Activated B cell treated with CpG ODN at 0.5 μM for 24 hours (primary cell): ENCODE measurements at regions of chr10 and their contacts with region 1.

Region 1: DNA sequence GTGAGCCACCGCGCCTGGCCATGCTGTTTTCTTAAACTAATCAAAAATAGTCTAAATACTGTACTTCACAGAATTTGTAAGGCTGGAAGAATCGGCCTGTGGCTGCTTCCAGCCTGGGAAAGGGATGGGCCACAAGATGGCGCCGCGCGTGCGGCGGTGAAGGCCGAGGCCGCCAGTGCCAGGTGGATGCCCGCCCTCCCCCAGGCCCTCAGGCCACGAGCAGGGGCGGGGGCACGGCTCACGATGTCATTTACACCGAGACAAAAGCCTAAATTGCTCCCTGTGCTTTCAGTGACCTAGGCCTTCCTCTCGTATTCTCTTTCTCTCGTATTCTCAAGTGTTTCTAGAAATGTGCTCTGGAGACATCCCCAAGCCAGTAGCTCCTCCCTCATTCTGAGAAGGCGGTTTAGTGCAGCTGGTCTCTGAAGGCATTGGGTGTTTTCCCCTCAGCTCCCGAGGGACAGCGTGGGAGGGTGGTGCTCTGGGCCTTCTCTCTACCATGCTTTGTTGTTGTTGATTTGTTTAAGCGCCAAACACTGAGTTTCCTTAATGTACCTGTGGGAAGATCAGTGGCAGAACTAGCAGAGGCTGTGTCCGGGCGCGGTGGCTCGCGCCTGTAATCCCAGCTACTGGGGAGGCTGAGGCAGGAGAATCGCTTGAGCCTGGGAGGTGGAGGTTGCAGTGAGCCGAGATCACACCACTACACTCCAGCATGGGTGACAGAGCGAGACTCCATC is 68.4 kb downstream of the CDC123 start:
- DNase-seq: peak; percentile 86
- ATAC-seq: peak; percentile 87
- H3K4me3 Mint-ChIP-seq: peak overlapping the region; percentile 83
- H3K27ac Mint-ChIP-seq: peak overlapping the region; percentile 100
- H3K4me1 Mint-ChIP-seq: peaks cover 58% of the 10 kb centered on the region
- H3K27me3 Mint-ChIP-seq: no peaks in the 10 kb centered on the region
- CTCF ChIP-seq: no peak

Region 2: DNA sequence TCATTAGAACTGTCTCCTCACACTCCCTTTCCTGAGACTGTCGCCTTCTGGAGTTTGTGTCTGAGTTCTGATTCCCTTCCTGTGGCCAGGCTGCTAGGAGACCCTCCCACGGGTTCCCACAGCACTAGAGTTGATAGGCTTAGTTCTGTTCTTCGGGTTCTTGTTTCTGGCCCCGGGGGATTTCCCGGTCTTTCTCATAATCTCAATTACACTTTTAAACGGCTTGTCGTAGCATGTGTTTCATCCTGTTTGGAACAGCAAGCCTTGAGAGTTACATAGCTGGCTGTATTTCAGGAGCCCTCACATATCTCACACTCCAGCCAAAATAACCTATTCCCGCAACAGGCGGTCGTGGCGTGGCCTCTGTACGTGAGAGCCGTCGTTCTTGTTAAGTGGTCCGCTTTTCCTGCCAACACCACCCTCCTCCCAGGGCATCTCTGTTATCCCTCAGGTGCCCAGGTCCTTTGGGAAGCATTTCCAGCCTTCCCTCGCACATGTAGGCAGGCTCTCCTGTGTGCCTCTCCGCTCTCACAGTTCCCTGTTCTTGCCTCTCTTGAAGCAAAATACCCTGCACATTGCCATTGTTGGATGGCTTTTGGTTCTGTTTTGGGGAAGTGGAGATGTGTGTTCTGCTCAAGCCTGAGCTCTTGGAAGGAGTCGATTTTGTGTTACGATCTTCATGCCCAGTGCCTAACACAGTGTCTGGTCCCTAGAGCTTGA is 22.4 kb before region 1 on chr10:
- CTCF ChIA-PET with region 1: interaction called, 5 read pairs
- POLR2A ChIA-PET with region 1: interaction called, 14 read pairs
- intact Hi-C with region 1: loop called (anchors 1 kb)
- DNase-seq: no peak
- ATAC-seq: no peak
- H3K4me3 Mint-ChIP-seq: peak overlapping the region; percentile 29
- H3K27ac Mint-ChIP-seq: peak overlapping the region; percentile 75
- H3K4me1 Mint-ChIP-seq: peaks cover 69% of the 10 kb centered on the region
- H3K27me3 Mint-ChIP-seq: no peaks in the 10 kb centered on the region
- CTCF ChIP-seq: no peak

Region 3: DNA sequence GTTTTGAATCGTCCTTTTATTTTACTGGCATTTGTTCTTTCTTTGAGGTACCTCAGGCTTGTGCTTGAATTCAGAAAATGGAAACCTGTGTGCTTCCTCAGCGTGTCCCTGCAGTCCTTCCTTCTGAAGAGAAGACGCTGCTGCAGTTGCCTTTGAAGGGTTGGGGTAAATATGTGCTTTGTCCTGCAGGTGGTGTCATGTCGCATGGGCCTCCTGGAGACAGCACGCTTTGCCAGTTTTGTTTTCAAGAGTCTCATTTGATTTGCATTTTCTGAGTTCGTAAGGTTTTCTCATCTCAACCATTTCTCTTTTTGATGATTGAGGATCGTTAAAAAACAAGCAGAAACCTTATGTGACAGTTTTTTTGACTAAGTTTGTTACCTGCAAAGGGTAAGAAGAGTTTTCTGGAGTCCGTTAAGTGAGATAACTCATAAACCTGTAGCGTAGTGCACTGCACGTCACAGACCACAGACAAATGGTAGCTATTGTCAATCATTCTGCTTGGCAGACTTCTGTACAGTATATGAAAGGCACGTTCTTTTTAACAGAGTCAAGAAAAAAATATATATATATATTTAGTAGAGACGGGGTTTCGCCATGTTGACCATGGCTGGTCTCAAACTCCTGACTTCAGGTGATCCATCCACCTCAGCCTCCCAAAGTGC is 11.4 kb before region 1 on chr10:
- CTCF ChIA-PET with region 1: interaction called, 3 read pairs
- POLR2A ChIA-PET with region 1: no interaction called
- intact Hi-C with region 1: loop called (anchors 1 kb)
- DNase-seq: no peak
- ATAC-seq: peak; percentile 98
- H3K4me3 Mint-ChIP-seq: peak overlapping the region; percentile 55
- H3K27ac Mint-ChIP-seq: peak overlapping the region; percentile 74
- H3K4me1 Mint-ChIP-seq: peaks cover 10% of the 10 kb centered on the region
- H3K27me3 Mint-ChIP-seq: no peaks in the 10 kb centered on the region
- CTCF ChIP-seq: peak; percentile 21

Region 4: GRCh38 chr10:12279281-12279680 is 14.9 kb after region 1 on chr10:
- CTCF ChIA-PET with region 1: interaction called, 3 read pairs
- POLR2A ChIA-PET with region 1: interaction called, 10 read pairs
- intact Hi-C with region 1: no loop called
- DNase-seq: no peak
- ATAC-seq: no peak
- H3K4me3 Mint-ChIP-seq: no peak overlapping the region
- H3K27ac Mint-ChIP-seq: no peak overlapping the region
- H3K4me1 Mint-ChIP-seq: peaks cover 17% of the 10 kb centered on the region
- H3K27me3 Mint-ChIP-seq: no peaks in the 10 kb centered on the region
- CTCF ChIP-seq: no peak

Region 5: GRCh38 chr10:12340371-12340770 is 76.0 kb after region 1 on chr10:
- CTCF ChIA-PET with region 1: interaction called, 3 read pairs
- POLR2A ChIA-PET with region 1: interaction called, 18 read pairs
- intact Hi-C with region 1: loop called (anchors 2 kb)
- DNase-seq: no peak
- ATAC-seq: peak; percentile 16
- H3K4me3 Mint-ChIP-seq: no peak overlapping the region
- H3K27ac Mint-ChIP-seq: peak overlapping the region; percentile 98
- H3K4me1 Mint-ChIP-seq: peaks cover 59% of the 10 kb centered on the region
- H3K27me3 Mint-ChIP-seq: no peaks in the 10 kb centered on the region
- CTCF ChIP-seq: no peak

Region 6: GRCh38 chr10:12389154-12389734 is 124.9 kb after region 1 on chr10:
- CTCF ChIA-PET with region 1: no interaction called
- POLR2A ChIA-PET with region 1: no interaction called
- intact Hi-C with region 1: no loop called
- DNase-seq: no peak
- ATAC-seq: no peak
- H3K4me3 Mint-ChIP-seq: peak overlapping the region; percentile 25
- H3K27ac Mint-ChIP-seq: peak overlapping the region; percentile 65
- H3K4me1 Mint-ChIP-seq: peaks cover 59% of the 10 kb centered on the region
- H3K27me3 Mint-ChIP-seq: no peaks in the 10 kb centered on the region
- CTCF ChIP-seq: no peak

Region 7: DNA sequence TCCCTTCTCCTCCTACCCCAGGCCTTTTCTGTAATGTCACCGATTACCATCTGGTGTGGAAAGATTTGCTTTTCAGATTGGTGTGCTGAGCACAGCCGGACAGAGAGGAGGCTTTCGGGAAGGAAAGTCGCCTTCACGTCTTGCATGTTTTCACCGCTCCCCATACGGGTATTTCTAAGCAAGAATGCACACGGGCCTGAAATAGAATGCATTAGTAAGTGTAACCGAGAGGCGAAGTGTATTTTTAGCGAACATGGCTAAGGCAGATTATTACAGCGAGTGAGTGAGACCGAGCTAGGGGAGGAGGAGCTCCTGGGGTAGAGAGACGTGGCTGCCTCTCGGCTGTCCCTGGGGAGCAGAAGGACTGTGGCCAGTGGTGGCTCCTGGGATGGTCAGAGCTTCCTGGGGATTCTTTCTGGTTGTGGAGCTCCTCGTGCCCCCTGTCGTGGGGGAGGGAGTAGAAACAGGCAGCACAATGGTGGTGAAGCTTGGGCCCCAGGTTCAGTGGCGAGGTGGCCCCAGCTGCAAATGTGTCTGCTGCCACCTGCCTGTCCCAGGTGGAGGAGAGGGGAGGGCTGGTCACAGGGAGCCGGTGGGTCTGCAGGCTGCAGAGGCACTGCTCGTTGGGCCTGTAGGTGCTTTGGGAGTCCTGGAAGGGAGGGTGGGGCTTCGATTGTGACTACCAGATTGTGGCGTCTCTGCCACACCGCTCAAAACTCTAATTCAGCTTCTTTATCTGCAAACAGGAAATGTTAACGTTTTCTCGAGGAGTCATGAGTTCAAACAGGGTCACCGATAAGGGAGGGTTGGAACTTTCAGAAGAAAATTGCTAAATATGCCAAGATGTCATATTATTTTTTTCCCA is 220.8 kb after region 1 on chr10:
- CTCF ChIA-PET with region 1: interaction called, 9 read pairs
- POLR2A ChIA-PET with region 1: interaction called, 14 read pairs
- intact Hi-C with region 1: loop called (anchors 1 kb)
- DNase-seq: peak; percentile 29
- ATAC-seq: peak; percentile 73
- H3K4me3 Mint-ChIP-seq: peak overlapping the region; percentile 71
- H3K27ac Mint-ChIP-seq: peak overlapping the region; percentile 78
- H3K4me1 Mint-ChIP-seq: peaks cover 63% of the 10 kb centered on the region
- H3K27me3 Mint-ChIP-seq: no peaks in the 10 kb centered on the region
- CTCF ChIP-seq: no peak